Cardiac septum (tissue), 1 donor: ENCODE measurements at regions of chr2 and their contacts with region 1.

Region 1: GRCh38 chr2:63841254-63842022 is at the start of gene UGP2:
- DNase-seq: peak; percentile 94
- total RNA-seq, gene UGP2: 327 TPM

Region 2: GRCh38 chr2:63588385-63589147 is 252.9 kb before region 1 on chr2 and contains the starts of genes MDH1 and WDPCP:
- intact Hi-C with region 1: loop called (anchors 5 kb)
- DNase-seq: peak; percentile 97
- total RNA-seq, gene MDH1: 1,107 TPM
- total RNA-seq, gene WDPCP: 27.3 TPM

Region 3: GRCh38 chr2:63698825-63699548 is 142.5 kb before region 1 on chr2:
- intact Hi-C with region 1: loop called (anchors 5 kb)
- DNase-seq: no peak

Region 4: DNA sequence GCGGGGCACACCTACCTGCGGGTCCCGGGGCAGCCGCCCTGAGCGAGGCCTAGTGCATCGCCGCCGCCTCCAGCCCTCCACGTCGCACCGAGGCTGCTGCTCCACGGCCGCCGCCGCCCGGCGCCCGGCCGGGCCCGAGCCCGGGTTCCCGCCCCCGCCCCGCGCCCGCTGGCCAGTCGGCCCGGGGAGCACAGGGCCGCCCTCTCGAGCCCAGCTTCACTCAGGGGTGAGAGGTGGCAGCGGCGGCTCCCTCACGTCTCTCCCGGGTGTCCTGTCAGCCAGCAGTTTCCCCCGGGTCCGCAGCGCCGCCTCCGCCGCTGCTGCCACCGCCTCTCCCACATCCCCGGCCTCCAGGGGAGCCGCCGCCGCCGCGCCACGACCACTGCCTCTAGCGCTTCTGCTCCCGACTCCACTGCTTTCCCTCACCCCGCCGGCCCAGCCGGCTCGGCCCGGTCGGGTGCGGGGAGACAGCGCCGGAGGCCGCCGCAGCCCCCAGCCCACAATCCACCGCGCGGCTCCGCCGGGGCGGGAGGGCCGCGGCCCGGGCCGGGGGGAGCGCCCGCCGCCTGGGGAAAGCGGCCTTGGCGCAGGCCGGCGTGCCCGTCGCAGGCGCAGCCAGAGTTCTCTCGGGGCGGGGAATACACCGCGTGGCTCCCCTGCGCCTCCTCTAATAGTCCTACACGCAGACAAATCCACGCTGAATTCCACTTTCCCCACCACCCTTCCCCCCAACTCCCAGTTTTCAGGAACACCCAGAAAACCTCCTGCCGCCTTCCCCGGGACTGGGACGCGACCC is 177.7 kb after region 1 on chr2 and contains the start of gene VPS54:
- intact Hi-C with region 1: loop called (anchors 10 kb)
- DNase-seq: peak; percentile 87
- total RNA-seq, gene VPS54: 12.7 TPM